ENCODE measurements at regions of chr6 and their contacts with region 1.

Region 1: GRCh38 chr6:99119109-99120031 is 171.6 kb upstream of the FBXL4 start:
- DNase-seq: no peak
- ATAC-seq: peak in 3 of 4 donors; percentile 49 to 72 (median 60)
- H3K4me3 ChIP-seq: no peak overlapping the region
- H3K27ac ChIP-seq: no peak overlapping the region
- H3K4me1 ChIP-seq: no peaks in the 10 kb centered on the region
- H3K27me3 ChIP-seq: peaks cover 2 to 10% (median 3%) of the 10 kb centered on the region in 3 donors
- CTCF ChIP-seq: peak; percentile 78

Region 2: DNA sequence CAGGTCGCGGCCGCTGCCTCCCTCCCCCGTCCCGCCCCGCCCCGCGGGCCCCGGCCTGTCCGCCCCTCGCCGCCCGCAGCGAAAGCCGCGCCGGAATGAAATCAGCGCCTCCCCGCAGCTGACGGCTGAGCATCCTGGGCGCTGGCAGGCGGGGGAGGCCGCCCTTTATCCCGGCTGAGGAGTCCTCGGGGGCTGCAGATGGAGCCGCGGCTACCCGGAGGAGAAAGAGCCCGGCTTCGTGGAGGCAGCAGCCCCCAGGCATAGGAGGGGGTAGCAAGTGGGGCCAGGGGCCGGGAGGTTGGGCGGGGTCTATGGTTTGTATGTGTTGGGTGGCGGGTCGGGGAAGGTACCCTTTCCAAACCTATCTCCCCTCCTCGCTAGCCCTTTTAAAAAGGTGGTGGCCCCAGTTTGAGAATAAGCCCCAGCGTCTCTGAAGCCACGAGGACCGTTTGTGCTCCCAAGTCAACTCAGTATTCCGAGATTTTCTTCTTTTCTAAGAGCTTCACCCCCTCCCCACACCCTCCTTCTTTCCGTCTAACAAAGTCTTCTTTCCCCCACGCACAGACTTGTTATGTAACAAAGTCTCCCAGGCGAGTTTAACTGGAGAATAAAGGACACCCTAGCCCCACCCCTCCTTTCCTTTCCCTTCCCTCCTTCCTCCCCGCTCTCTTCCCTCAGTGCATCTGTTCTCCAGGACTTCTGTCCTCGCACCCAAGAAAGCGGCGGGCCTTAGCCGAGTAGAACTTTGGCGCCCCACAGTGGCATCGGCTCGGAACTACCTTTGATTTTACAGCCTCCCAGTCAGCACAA is 274.0 kb before region 1 on chr6:
- intact Hi-C with region 1: loop called in 1 of 2 experiments (anchors 10 kb)
- DNase-seq: peak; percentile 62 to 79
- ATAC-seq: peak; percentile 66 to 83 (median 76)
- H3K4me3 ChIP-seq: peak overlapping the region; percentile 44
- H3K27ac ChIP-seq: no peak overlapping the region
- H3K4me1 ChIP-seq: peaks cover 5% of the 10 kb centered on the region
- H3K27me3 ChIP-seq: peaks cover 3 to 99% (median 35%) of the 10 kb centered on the region in 3 donors
- CTCF ChIP-seq: peak; percentile 77

Measured in psoas muscle (tissue), 8 donors.